Brain microvascular endothelial cell (primary cell): ENCODE measurements at regions of chr5 and their contacts with region 1.

Region 1: DNA sequence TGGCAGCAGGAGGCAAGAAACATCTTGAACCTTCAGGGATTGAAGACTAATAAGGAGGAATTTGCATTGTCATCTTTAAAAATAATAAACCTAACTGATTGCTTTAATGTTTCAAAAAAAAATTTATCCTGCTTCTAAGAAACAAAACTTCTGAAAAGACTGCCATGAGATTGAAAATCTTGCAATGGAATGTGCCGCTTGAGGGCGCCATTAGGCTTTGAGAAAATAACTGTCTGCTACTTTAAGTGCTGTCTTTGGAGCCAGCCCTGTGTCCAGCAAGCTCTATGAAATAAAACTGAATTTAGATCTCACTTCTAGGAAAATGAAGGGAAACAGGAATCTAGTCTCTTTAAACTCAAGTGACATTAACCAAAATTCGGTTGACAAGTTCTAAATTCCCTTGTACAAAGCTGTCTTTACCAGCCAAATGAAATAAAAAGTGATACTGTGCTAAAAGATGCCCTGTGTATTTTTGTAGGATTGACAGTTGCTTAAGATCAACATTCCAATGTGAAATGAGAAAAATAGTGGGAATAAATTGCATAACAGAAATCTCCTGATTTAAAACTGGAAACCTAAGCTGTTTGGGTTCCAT is 79.4 kb downstream of the ESM1 start:
- DNase-seq: peak; percentile 79
- H3K4me3 ChIP-seq: no peak overlapping the region
- H3K27ac ChIP-seq: no peak overlapping the region
- H3K27me3 ChIP-seq: no peaks in the 10 kb centered on the region
- CTCF ChIP-seq: peak; percentile 81

Region 2: GRCh38 chr5:54753034-54753433 is 153.0 kb before region 1 on chr5:
- in situ Hi-C with region 1: no loop called
- DNase-seq: peak; percentile 72
- H3K4me3 ChIP-seq: peak overlapping the region; percentile 4
- H3K27ac ChIP-seq: no peak overlapping the region
- H3K27me3 ChIP-seq: no peaks in the 10 kb centered on the region
- CTCF ChIP-seq: no peak

Region 3: DNA sequence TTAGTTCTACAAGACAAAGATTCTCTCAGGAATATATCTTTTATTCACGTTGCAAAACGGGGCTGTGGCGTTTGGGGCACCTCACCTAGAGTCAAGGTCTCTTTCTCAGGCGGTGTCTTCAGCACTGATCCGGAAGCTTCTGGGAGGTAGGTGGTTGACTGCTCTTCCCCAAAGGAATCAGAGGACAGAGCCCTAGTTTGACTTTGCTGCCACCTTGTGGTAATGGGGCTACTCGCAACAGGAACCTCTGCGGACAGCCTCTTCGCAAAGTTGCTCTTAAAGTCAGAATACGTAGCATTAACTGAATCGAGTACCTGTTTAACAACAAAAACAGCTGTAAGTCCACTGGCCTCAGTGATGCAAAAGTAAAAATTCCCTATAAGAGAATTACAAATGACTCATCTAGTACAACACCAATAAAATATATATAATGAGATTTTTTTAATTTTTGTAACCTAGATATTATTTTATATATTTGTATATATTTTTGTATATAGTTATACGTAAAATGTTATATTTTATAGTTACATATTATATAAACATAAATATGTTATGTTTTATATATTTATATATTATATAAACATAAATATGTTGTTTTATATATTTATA is 240.6 kb after region 1 on chr5:
- in situ Hi-C with region 1: loop called (anchors 25 kb)
- DNase-seq: peak; percentile 82
- H3K4me3 ChIP-seq: no peak overlapping the region
- H3K27ac ChIP-seq: no peak overlapping the region
- H3K27me3 ChIP-seq: no peaks in the 10 kb centered on the region
- CTCF ChIP-seq: peak; percentile 97